ENCODE measurements at regions of chr1 and their contacts with region 1.

Region 1: GRCh38 chr1:180631766-180632325 is at the start of gene XPR1:
- DNase-seq: peak; percentile 98
- ATAC-seq: peak; percentile 98 to 100 (median 100)
- H3K4me3 ChIP-seq: peak within 1 kb of the TSS; percentile 98
- H3K27ac ChIP-seq: peak within 1 kb of the TSS; percentile 89
- H3K4me1 ChIP-seq: peaks cover 41% of the 10 kb centered on the region
- H3K27me3 ChIP-seq: no peaks in the 10 kb centered on the region
- CTCF ChIP-seq: peak; percentile 45
- total RNA-seq, gene XPR1: 10.9 to 19.1 (median 13.2) TPM

Region 2: DNA sequence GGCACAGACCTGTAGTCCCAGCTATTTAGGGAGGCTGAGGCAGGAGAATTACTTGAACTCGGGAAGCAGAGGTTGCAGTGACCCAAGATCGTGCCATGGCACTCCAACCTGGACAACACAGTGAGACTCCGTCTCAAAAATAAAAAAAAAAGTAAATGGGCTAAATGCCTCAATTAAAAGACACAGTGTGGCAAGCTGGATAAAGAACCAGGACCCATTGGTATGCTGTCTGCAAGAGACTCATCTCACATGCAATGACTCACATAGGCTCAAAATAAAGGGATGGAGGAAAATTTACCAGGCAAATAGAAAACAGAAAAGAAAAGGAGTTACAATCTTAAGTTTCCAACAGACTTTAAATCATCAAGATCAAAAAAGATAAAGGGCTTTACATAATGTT is 169.7 kb before region 1 on chr1:
- intact Hi-C with region 1: no loop called
- DNase-seq: no peak
- ATAC-seq: no peak
- H3K4me3 ChIP-seq: no peak overlapping the region
- H3K27ac ChIP-seq: no peak overlapping the region
- H3K4me1 ChIP-seq: no peaks in the 10 kb centered on the region
- H3K27me3 ChIP-seq: no peaks in the 10 kb centered on the region
- CTCF ChIP-seq: no peak

Region 3: GRCh38 chr1:180521474-180522207 is 110.2 kb before region 1 on chr1:
- intact Hi-C with region 1: loop called in 1 of 2 experiments (anchors 5 kb)
- DNase-seq: no peak
- ATAC-seq: peak in 2 of 4 donors; percentile 26 to 40
- H3K4me3 ChIP-seq: no peak overlapping the region
- H3K27ac ChIP-seq: no peak overlapping the region
- H3K4me1 ChIP-seq: peaks cover 16% of the 10 kb centered on the region
- H3K27me3 ChIP-seq: no peaks in the 10 kb centered on the region
- CTCF ChIP-seq: no peak

Region 4: DNA sequence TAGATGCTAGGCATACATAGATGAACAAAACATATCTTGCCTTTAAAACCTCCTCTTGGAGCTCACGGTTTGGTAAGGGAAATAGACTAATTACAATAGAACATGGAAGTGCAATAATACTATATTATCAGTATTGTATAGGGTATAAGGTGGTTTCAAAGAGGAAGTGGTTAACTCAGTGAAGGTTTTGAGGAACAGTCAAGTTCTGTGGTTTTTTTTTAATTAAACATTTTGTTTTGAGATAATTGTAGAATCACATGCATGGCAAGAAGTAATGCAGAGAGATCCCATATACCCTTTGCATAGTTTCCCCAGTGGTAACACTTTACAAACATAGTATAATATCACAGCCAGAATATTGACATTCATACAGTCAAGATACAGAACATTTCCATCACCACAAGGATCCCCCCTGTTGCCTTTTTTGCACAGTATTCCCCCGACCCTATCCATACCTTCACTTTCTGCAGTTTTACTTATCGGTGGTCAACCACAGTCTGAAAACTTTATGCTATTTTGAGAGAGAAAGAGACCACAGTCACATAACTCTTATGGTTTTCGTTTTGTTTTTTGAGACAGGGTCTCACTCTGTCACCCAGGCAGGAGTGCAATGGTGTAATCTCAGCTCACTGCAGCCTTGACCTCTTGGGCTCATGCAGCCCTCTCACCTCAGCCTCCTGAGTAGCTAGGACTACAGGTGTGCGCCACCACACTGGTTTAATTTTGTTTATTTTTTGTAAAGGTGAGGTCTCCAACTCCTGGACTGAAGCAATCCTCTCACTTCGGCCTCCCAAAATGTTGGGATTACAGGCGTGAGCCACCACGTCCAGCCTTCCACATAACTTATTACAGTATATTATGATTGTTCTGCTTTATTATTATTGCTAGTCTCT is 220.4 kb after region 1 on chr1:
- intact Hi-C with region 1: loop called in 1 of 2 experiments (anchors 10 kb)
- DNase-seq: no peak
- ATAC-seq: no peak
- H3K4me3 ChIP-seq: no peak overlapping the region
- H3K27ac ChIP-seq: no peak overlapping the region
- H3K4me1 ChIP-seq: no peaks in the 10 kb centered on the region
- H3K27me3 ChIP-seq: no peaks in the 10 kb centered on the region
- CTCF ChIP-seq: no peak